Heart right ventricle (tissue), 16 donors: ENCODE measurements at regions of chr12 and their contacts with region 1.

Region 1: DNA sequence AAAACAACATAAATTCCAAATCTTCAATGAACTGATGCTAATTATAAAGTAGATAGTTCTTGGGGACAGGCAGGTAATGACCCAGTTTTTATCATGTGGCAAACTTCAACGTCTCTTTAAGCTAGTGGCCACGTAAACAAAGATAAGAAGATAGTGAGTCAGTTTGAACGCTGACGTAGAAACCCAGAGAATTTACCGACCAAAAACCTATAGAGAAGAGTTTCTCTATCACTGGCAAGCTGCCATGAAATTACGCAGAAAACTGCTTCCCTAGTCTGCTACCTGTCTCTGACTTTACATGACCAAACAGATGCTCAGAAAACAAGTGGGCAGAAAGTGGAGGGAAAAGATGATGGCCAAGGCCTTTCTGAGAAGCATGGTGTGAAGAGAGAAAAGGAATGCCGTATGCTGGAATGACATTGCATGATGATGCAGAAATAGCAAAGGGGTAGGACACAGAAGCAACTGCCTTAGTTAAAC is 136.3 kb downstream of the ITPR2 start:
- DNase-seq: no peak
- ATAC-seq: no peak
- H3K4me3 ChIP-seq: no peak overlapping the region
- H3K27ac ChIP-seq: no peak overlapping the region
- H3K4me1 ChIP-seq: no peaks in the 10 kb centered on the region
- H3K27me3 ChIP-seq: no peaks in the 10 kb centered on the region
- CTCF ChIP-seq: no peak

Region 2: DNA sequence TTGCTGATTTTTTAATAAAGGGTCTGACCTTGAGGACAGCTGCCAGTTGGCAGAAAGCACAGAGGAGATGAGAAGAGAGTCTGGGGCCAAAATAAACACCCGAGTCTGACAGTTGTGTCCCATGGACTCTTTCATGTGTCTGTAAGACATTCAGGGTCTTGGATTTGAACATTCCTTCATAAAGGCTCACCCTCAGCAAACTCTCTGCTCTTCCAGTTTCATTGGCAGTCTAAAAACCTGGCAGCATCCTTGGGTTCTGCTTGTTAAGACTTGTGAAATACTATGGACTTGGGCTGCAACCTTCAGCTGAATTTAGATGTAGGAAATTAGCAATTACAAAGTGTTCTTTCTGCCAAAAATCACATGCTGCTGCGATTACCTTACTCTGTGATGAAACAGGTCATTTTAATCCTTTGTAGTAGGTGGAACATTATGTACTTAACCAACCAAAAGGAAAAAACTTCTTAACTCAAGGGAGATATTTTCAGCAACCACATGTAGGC is 1111.6 kb before region 1 on chr12:
- intact Hi-C with region 1: loop called in 1 of 10 experiments (anchors 5 kb)
- DNase-seq: no peak
- ATAC-seq: peak in 5 of 8 donors; percentile 26 to 77 (median 59)
- H3K4me3 ChIP-seq: no peak overlapping the region
- H3K27ac ChIP-seq: no peak overlapping the region
- H3K4me1 ChIP-seq: peaks cover 0 to 7% (median 0%) of the 10 kb centered on the region in 9 donors
- H3K27me3 ChIP-seq: no peaks in the 10 kb centered on the region
- CTCF ChIP-seq: no peak